ENCODE measurements at regions of chr10 and their contacts with region 1.

Region 1: DNA sequence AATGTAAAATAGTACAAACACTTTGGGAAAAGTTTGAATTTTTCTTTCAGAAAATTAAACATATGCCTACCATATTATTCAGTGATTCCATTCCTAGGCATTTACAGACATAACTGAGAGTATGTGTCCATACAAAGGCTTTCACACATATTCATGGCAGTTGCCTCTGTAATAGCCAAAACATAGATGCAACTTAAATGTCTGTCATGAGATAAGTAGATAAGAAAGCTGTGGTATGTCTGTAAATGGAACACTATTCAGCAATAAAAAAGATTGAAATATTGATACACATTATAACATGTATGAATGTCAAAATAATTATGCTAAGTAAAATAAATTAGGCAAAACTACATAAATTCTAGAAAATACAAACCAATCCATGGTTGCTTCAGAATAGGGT is 964.5 kb upstream of the MBL2 start:
- DNase-seq: no peak
- H3K4me3 ChIP-seq: no peak overlapping the region
- H3K27ac ChIP-seq: no peak overlapping the region
- H3K4me1 ChIP-seq: no peaks in the 10 kb centered on the region
- H3K27me3 ChIP-seq: no peaks in the 10 kb centered on the region
- CTCF ChIP-seq: no peak

Region 2: GRCh38 chr10:53886325-53887300 is 149.5 kb after region 1 on chr10:
- CTCF ChIA-PET with region 1: no interaction called
- POLR2A ChIA-PET with region 1: no interaction called
- intact Hi-C with region 1: no loop called
- DNase-seq: no peak
- H3K4me3 ChIP-seq: no peak overlapping the region
- H3K27ac ChIP-seq: no peak overlapping the region
- H3K4me1 ChIP-seq: no peaks in the 10 kb centered on the region
- H3K27me3 ChIP-seq: no peaks in the 10 kb centered on the region
- CTCF ChIP-seq: no peak

Region 3: GRCh38 chr10:54702583-54703485 is 965.7 kb after region 1 on chr10:
- CTCF ChIA-PET with region 1: no interaction called
- POLR2A ChIA-PET with region 1: interaction called, 12 read pairs
- intact Hi-C with region 1: no loop called
- DNase-seq: no peak
- H3K4me3 ChIP-seq: no peak overlapping the region
- H3K27ac ChIP-seq: no peak overlapping the region
- H3K4me1 ChIP-seq: no peaks in the 10 kb centered on the region
- H3K27me3 ChIP-seq: no peaks in the 10 kb centered on the region
- CTCF ChIP-seq: no peak